GM12878 (cell line): ENCODE measurements at regions of chr19 and their contacts with region 1.

Region 1: DNA sequence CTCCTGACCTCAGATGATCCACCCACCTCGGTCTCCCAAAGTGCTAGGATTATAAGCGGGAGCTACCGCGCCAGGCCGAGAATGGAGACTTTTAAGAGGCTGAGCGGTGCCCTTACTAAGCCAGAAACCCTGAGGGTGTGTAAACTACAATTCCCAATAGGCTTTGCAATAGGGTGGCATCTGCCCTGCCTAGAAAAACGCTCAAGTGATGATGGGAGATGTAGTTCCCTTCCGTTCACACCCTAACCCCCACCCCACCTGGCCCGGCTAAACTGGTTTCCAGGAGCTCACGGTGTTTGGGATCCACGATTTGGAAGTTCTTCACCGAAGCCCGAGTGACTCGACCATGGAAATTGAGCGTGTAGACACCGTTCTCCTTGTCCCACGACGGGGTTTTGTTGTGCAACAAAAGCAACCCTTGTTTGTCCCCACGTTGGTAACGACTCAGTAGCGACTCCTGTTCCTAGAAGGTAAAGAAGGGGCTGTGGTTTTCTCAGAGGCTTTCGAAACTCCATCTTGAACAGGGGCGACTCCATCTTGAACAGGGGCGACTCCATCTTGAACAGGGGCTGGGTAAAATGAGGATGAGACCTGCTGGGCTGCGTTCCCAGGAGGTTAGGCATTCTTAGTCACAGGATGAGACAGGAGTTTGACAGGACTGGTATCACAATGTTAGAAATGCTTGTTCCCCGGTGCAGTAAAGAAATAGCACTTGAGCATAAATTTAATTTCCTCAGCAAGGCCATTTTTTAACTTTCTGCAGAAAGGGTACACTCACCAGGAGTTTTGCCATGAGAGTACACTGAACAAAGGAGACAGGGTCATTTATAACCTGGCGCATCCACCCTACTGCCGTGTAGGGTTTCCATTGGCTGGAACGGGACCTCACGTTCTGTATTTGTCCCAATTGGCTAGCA is 9.8 kb downstream of the PPP1R15A start:
- DNase-seq: no peak
- ATAC-seq: peak; percentile 62
- H3K4me3 ChIP-seq: no peak overlapping the region
- H3K27ac ChIP-seq: no peak overlapping the region
- H3K4me1 ChIP-seq: peaks cover 14% of the 10 kb centered on the region
- H3K27me3 ChIP-seq: no peaks in the 10 kb centered on the region
- CTCF ChIP-seq: no peak
- EP300 ChIP-seq: no peak
- POLR2A ChIP-seq: peak; percentile 44
- RAD21 ChIP-seq: no peak

Region 2: DNA sequence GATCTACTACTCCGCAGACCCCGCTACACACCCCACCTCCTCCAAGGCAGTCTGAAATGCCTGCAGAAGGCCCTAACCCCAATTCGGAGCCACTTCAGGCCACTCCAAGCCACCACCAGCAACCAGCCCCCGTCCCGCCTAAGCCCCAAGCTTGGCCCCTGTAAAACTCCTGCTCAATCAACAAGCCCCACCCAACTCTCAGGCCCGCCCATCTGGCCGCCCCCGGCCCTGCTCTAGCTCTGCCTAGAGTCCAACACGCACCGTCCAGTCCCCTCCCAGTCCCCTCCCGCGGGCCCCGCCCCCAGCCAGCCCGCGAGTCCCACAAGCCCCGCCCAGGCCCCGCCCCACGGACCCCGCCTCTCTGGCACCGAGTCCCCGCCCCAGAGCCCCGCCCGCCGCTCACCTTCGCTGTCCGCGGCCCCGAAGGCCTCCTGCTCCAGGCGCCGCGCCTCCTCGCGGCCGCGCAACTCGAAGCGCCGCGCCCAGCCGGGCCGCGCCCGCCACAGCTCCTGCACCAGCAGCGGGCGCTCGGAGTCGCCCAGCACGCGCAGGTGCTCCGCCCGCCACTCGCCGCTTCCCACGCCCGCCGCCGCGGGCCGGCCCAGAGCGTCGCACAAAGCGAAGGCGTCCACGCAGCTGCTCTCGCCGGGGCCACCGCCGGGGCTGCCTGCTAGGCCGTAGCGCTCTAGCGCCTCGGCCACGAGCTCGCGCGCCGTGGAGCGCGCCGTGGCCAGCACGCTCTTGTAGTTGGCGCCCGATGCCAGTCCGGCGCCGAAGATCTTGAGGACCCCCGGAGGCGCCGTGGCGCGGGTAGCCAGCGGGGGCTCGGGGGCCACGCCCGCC is 143.2 kb before region 1 on chr19:
- CTCF ChIA-PET with region 1: no interaction called
- POLR2A ChIA-PET with region 1: no interaction called
- RAD21 ChIA-PET with region 1: no interaction called
- SMC1A ChIA-PET with region 1: no interaction called
- in situ Hi-C with region 1: no loop called
- intact Hi-C with region 1: no loop called
- DNase-seq: peak; percentile 11
- ATAC-seq: peak; percentile 96
- H3K4me3 ChIP-seq: peak overlapping the region; percentile 44
- H3K27ac ChIP-seq: no peak overlapping the region
- H3K4me1 ChIP-seq: peaks cover 5% of the 10 kb centered on the region
- H3K27me3 ChIP-seq: peaks cover 6 to 9% of the 10 kb centered on the region in 2 experiments; a peak in 3 of 4 replicates
- CTCF ChIP-seq: peak in 2 of 3 experiments; percentile 25 to 48; a peak in 3 of 6 replicates
- EP300 ChIP-seq: no peak
- POLR2A ChIP-seq: no peak
- RAD21 ChIP-seq: peak; percentile 40

Region 3: DNA sequence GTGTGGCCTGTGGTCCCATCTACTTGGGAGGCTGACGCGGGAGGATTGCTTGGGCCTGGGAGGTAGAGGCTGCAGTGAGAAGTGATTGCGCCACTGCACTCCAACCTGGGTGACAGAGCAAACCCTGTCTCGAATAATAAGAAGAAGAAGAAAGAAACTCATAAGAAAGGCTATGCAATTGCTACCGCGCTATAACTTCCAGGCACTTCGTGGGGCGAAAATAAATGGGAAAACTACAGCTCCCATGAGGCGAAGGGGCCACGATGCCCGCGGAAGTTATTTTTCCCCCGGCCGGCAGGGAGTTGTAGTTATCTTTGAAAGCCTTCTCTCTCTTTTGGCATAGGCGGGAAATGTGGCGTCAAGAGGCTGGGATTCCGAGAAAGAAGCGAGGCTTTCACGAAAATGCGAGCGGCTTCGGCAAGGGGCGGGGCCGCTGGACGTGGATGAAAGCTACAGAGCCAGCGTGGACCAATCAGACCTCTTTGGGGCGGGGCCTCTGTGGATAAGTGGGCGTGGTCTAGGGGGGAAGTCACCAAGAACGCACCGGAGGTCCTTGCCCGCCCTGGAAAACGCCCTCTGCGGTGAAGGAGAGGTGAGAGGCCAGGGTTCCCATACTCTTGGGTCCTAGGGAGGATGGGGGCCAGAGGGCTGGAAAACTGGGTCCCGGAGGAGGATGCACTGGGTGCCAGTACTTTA is 17.9 kb after region 1 on chr19 and contains the start of gene NUCB1:
- CTCF ChIA-PET with region 1: interaction called, 6 read pairs
- POLR2A ChIA-PET with region 1: interaction called, 14 read pairs
- RAD21 ChIA-PET with region 1: interaction called, 5 read pairs
- SMC1A ChIA-PET with region 1: interaction called, 10 read pairs
- in situ Hi-C with region 1: no loop called
- intact Hi-C with region 1: no loop called
- DNase-seq: peak; percentile 89
- ATAC-seq: peak; percentile 95
- H3K4me3 ChIP-seq: peak within 1 kb of the TSS; percentile 99
- H3K27ac ChIP-seq: peak within 1 kb of the TSS; percentile 47
- H3K4me1 ChIP-seq: no peaks in the 10 kb centered on the region; the same call in 1 of the 2 replicates
- H3K27me3 ChIP-seq: no peaks in the 10 kb centered on the region
- CTCF ChIP-seq: 0 out of 6 replicates have a peak, but pooled peaks of 1 of the 3 experiments have one; percentile 13
- EP300 ChIP-seq: no peak
- POLR2A ChIP-seq: peak; percentile 69
- RAD21 ChIP-seq: no peak
- polyA plus RNA-seq, gene NUCB1: 1.8 to 3.2 TPM

Region 4: DNA sequence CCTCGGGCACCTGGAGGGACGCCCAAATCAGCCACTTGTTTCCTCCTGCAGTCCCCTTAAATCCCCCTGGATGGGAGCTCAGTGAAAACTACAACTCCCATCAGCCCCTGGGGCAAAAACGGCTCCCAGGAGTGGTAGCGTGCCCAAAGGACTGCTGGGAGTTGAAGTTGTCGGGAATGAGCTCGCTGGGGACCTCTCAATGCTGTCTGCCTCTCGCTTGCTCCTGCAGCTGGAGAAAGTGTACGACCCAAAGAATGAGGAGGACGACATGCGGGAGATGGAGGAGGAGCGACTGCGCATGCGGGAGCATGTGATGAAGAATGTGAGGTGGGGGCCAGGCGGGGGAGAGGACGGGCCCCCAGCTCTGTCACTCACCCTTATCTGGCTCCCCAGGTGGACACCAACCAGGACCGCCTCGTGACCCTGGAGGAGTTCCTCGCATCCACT is 36.8 kb after region 1 on chr19:
- CTCF ChIA-PET with region 1: no interaction called
- POLR2A ChIA-PET with region 1: no interaction called
- RAD21 ChIA-PET with region 1: no interaction called
- SMC1A ChIA-PET with region 1: no interaction called
- in situ Hi-C with region 1: no loop called
- intact Hi-C with region 1: no loop called
- DNase-seq: no peak
- ATAC-seq: peak; percentile 57
- H3K4me3 ChIP-seq: no peak overlapping the region
- H3K27ac ChIP-seq: no peak overlapping the region
- H3K4me1 ChIP-seq: peaks cover 8% of the 10 kb centered on the region
- H3K27me3 ChIP-seq: no peaks in the 10 kb centered on the region
- CTCF ChIP-seq: no peak
- EP300 ChIP-seq: no peak
- POLR2A ChIP-seq: no peak; the same call in 1 of the 2 replicates
- RAD21 ChIP-seq: no peak